Left lung (tissue), 14 donors: ENCODE measurements at regions of chr20 and their contacts with region 1.

Region 1: GRCh38 chr20:44601801-44602204 is 19.4 kb downstream of the PKIG start:
- DNase-seq: peak in 2 of 4 donors; percentile 88 to 92
- ATAC-seq: peak; percentile 64
- H3K4me3 ChIP-seq: no peak overlapping the region
- H3K27ac ChIP-seq: peak overlapping the region; percentile 73 to 88
- H3K4me1 ChIP-seq: peaks cover 29 to 63% of the 10 kb centered on the region in 2 donors
- H3K27me3 ChIP-seq: no peaks in the 10 kb centered on the region
- CTCF ChIP-seq: no peak

Region 2: DNA sequence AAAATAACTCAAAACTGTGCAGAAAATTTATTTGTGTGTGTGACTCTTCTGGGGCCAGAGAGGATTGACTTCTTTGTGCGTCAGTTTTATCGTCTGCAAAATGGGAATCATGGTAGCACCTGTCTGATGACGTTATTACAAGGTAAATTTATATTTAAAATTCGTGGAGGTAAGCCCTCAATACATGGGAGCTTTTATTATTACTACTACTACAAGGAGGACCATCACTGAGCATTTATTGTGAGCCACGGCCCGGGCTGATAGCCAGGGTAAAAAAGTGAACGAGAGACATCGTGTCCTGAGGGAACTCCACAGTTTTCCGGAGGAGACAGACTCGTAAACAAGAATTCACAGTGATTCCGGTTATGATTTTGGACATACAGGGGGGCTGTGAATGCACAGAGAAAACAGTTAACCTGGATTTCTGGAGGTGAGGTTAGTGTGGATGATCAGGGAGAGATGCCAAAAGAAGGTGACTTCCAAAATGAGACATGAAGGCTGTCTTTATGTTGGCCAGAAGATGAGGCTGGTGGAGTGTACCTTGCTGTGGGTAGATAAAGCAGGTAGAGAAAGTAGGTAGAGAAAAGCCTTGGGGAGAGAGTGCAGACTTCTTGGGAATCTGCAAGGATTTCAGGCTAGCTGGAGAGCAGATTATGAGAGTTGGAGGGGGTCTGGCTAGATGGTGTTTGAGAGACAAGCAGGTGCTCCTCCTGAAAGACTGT is 69.4 kb before region 1 on chr20:
- intact Hi-C with region 1: loop called in 1 of 2 experiments (anchors 5 kb)
- DNase-seq: no peak
- ATAC-seq: peak; percentile 11
- H3K4me3 ChIP-seq: peak overlapping the region; percentile 61 to 65
- H3K27ac ChIP-seq: peak overlapping the region; percentile 66 to 78
- H3K4me1 ChIP-seq: peaks cover 0 to 33% of the 10 kb centered on the region in 2 donors
- H3K27me3 ChIP-seq: peaks cover 0 to 5% of the 10 kb centered on the region in 2 donors
- CTCF ChIP-seq: no peak